Naive thymus-derived CD8-positive, alpha-beta T cell (primary cell): ENCODE measurements at regions of chr6 and their contacts with region 1.

Region 1: DNA sequence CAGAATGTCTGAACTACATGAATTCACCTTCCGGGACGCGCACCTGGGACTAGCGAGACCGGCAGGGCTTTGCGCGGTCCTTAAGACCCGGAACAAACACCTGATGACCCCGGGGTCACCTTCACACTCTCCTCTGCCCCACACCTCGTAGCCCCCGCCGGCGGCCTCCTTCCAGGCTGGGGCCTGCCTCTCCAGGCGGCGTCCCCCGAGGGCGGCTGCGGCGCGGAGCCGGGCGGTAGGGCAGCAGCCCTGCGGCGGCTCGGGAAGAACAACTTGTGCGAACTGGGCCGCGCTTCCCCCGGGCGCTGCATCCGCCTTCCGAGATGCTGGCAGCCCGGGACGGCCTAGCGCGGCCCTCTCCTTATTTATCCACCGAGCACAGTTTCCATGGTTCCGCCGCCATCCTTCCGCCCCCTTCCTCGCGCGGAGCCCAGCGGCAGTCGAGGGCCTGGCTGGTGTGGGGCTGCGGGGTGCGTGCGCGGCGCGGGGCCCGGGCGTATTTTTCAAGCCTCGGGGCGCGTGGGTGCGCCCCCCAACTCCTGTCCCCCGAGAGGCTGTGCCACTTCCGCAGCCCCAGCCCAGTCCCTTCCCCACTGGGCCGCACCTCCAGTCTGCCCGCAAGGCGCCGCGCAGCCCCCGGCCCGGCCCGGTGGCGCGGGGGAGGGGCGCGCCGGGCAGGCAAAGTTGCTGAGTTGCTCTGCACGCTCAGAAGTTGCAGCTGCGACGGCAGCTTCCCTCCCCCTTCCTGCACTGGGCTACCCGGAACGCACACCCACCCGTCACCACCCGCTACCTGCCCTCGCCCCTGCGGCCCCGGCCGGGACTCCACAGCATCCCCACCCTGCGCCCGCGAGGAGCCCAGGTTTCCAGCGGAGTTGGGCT is 56.3 kb upstream of the RREB1 start:
- DNase-seq: peak; percentile 53 to 79 (median 58)
- ATAC-seq: peak; percentile 78 to 84
- H3K4me3 Mint-ChIP-seq: peak overlapping the region; percentile 68 to 90 (median 75)
- H3K27ac Mint-ChIP-seq: peak overlapping the region in 6 of 10 donors; percentile 52 to 84 (median 80)
- H3K4me1 Mint-ChIP-seq: peaks cover 6 to 24% (median 14%) of the 10 kb centered on the region in 4 donors
- H3K27me3 Mint-ChIP-seq: no peaks in the 10 kb centered on the region

Region 2: GRCh38 chr6:7086488-7086887 is 35.0 kb after region 1 on chr6:
- POLR2A ChIA-PET with region 1: interaction called, 13 read pairs
- DNase-seq: peak in 9 of 10 donors; percentile 7 to 52 (median 26)
- ATAC-seq: peak; percentile 71 to 82
- H3K4me3 Mint-ChIP-seq: peak overlapping the region; percentile 73 to 89 (median 85)
- H3K27ac Mint-ChIP-seq: peak overlapping the region; percentile 77 to 95 (median 90)
- H3K4me1 Mint-ChIP-seq: peaks cover 19 to 49% (median 40%) of the 10 kb centered on the region in 4 donors
- H3K27me3 Mint-ChIP-seq: no peaks in the 10 kb centered on the region

Region 3: DNA sequence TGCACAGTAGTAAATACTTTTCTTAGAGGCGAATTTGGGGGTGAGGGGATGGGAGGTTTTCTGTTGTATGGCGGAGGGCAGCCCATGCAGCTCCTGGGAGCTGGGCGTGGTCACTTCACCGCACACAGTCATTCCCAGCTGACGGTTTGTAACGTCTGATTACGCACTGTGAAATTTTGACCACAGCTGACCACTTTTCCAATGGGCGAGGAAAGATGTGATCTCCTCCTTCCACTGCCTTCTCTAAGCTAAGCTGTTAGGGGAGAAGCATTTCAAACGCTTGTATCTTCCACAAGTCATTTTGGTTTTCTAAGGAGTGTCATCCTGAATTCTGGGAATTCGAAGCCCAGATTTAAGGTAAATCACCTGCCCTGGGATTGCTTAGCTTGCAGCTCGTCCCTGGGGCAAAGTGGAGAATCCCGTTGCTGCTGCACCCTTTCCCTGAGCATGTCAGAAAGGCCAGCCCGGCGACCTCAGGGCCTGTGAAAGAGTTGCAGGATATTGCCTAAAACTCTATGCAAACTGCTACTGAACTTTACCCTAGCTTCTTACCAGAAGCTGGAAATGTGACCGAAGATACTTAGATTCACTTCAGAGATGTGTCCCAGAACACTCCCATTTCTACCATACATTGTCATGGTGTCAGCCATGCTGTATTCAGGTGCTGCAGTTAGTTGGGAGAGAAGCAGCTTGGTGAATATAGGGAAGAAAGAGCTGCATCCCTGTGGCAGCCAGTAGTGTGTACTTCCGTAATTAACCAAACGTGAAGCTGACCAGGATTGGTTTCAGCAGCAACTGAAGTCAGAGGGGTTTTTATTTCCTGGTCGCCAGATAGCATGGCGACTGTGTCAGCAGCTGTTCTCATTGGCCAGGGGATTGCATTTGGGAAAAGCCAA is 115.2 kb after region 1 on chr6:
- POLR2A ChIA-PET with region 1: no interaction called
- DNase-seq: no peak
- ATAC-seq: no peak
- H3K4me3 Mint-ChIP-seq: peak overlapping the region in 1 of 10 donors; percentile 9
- H3K27ac Mint-ChIP-seq: no peak overlapping the region
- H3K4me1 Mint-ChIP-seq: peaks cover 39 to 80% (median 71%) of the 10 kb centered on the region in 4 donors
- H3K27me3 Mint-ChIP-seq: no peaks in the 10 kb centered on the region